Endothelial cell of umbilical vein (primary cell): ENCODE measurements at regions of chr2 and their contacts with region 1.

Region 1: DNA sequence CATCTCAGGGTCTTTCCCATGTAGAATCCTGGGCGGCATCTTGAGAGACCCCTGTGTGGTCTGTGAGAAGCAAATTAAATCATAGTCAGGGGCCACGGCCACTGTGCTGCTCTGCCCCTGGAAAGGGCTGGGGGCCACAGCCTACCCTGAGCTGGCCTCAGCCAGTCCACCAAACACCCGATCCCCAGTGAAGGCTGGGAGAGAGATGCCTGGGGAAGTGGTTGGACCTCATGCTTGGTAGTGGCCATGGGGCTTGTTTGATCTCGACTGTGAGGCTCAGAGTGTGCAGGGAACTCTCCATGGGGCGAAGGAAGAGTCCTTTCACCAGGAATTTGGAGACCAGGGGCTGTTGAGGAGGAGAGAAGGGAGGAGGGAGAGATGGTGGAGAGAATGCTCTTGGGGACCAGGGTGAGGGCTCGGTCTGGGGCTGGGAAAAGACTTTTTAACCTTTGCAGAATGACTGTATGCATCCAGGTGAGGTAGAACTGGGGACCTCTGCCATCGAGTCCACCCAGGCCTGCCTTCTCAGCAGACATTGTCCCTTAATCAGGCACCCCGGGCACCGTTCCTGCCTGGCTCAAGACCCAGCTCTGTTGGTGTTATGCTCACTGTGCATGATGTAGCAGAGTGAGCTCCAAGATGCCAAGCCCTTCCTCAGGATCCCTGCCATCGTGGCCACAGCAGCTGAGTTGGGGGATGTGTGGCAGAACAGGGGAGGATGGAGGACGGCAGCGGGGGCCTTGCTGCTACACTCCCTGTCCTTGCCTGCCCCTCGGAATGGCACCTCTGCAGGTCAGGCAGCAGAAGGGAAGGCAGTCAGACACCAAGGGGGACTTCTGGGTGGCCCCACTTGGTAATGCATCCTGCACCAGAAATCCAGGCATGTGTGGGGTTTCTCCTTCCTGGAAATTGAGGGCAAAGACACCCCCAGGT is 249.9 kb downstream of the DYSF start:
- DNase-seq: no peak
- H3K4me3 ChIP-seq: no peak overlapping the region
- H3K27ac ChIP-seq: no peak overlapping the region
- H3K4me1 ChIP-seq: no peaks in the 10 kb centered on the region
- H3K27me3 ChIP-seq: peaks cover 0 to 4% of the 10 kb centered on the region in 2 experiments
- CTCF ChIP-seq: no peak
- POLR2A ChIP-seq: no peak

Region 2: DNA sequence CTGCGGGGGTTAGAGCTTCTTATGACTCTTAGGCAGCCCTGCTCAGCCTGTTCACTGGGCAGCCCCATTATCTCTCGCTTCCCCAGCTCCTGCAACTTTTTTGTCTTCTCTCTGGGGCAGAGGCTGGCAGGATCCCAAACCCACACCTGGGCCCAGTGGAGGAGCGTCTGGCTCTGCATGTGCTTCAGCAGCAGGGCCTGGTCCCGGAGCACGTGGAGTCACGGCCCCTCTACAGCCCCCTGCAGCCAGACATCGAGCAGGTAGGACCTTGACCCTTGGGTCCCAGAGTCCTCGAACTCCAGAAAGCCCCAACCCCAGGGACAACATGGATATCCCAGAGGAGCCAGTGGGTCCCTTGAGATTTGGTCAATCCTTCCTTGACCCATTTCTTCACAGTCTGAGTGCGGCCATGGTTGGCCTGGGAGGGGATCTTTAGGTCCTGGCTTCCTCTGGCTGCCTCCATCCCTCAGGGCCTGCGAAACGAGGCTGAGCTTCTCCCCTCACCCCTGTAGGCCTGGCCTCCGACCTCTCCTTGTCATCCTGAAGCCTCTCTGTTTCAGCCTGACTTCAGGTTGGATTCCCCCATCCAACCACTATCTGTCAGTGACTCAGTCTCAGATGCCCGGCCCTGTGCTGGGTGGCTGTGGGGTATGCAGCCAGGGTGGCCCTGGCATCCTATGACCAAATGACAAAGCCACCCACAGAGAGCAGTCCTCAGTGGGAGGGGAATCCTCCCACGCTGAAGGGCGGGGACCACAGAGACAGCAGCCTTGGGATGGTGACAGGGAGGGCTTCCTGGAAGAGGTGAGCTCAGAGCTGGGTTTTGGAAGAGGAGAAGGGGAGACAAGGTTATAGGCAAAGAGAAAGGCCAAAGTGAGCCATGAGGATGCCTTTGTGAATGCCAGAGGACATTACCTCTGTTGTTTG is 35.7 kb before region 1 on chr2:
- CTCF ChIA-PET with region 1: no interaction called
- POLR2A ChIA-PET with region 1: no interaction called
- dilution Hi-C with region 1: no loop called
- intact Hi-C with region 1: loop called (anchors 1 kb)
- DNase-seq: no peak
- H3K4me3 ChIP-seq: no peak overlapping the region
- H3K27ac ChIP-seq: no peak overlapping the region
- H3K4me1 ChIP-seq: no peaks in the 10 kb centered on the region
- H3K27me3 ChIP-seq: no peaks in the 10 kb centered on the region
- CTCF ChIP-seq: no peak
- POLR2A ChIP-seq: no peak